ENCODE measurements at regions of chr10 and their contacts with region 1.

Region 1: DNA sequence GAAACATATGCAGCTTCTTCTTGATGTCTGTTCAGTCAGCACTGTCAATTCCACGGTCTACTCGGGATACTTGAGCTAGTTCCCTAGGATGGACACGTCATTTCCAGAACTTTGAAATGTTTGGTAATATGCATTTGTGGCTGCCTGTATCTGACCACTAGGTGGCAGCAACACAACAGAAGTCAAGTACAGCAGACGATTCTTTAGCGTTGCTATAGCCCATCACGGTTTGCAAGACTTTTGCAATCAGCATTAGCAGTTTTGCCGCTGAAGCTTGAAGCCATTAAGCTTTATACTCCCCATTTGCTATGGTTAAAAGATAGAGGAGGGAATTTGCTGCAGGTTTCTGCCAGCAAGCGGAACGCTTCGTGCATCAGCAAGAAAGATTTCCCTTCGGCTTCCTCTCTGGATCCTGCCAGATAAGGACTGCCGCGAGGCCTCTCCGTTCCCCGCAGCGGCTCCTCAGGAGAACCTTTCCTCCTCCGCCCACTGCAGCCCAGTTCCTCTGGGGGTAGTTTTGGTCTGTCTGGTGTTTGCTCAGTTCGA is 63.5 kb downstream of the ABCC2 start:
- DNase-seq: peak; percentile 41 to 88 (median 58)
- ATAC-seq: peak; percentile 81
- H3K4me3 ChIP-seq: peak overlapping the region; percentile 13
- H3K4me3 Mint-ChIP-seq: no peak overlapping the region
- H3K27ac ChIP-seq: no peak overlapping the region
- H3K27ac Mint-ChIP-seq: no peak overlapping the region
- H3K4me1 ChIP-seq: peaks cover 6% of the 10 kb centered on the region
- H3K4me1 Mint-ChIP-seq: peaks cover 5% of the 10 kb centered on the region
- H3K27me3 ChIP-seq: peaks cover 0 to 8% of the 10 kb centered on the region in 2 experiments
- H3K27me3 Mint-ChIP-seq: no peaks in the 10 kb centered on the region
- CTCF ChIP-seq: peak; percentile 92

Region 2: DNA sequence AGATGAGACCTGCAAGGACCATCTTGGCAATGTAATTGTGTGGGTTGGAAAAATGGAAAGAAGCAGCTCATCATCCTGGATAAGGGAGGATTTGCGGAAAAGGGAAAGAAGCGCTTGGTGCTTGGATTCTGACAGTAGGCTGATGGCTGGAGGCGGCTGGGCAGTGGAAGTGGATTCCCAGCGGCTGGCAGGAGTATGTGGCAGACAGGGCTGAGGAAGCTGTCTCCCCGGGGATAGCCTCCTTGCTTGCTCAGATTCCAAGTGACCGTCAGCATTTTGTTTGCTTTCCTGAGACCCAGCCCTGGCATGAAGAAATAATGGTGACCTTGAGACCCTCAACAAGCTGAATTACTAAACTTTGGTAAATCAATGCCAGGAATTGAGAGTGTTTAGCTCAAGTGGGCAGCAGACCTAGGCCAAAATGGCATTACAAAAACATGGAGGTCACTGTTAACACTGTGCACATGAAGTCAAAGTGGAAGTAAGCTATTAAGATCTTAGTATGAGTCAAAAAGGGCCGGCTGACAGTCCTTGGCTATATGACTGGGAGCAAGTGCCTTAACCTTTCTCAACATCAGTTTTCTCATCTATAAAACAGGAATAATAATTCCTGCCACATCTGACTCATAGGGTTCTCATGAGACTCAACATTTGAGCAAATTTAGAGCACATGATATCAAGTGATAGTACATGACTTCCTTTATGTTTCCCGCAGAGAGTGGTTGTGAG is 247.0 kb before region 1 on chr10:
- CTCF ChIA-PET with region 1: no interaction called
- POLR2A ChIA-PET with region 1: no interaction called
- intact Hi-C with region 1: no loop called
- DNase-seq: no peak
- ATAC-seq: no peak
- H3K4me3 ChIP-seq: no peak overlapping the region
- H3K4me3 Mint-ChIP-seq: no peak overlapping the region
- H3K27ac ChIP-seq: no peak overlapping the region
- H3K27ac Mint-ChIP-seq: no peak overlapping the region
- H3K4me1 ChIP-seq: no peaks in the 10 kb centered on the region
- H3K4me1 Mint-ChIP-seq: no peaks in the 10 kb centered on the region
- H3K27me3 ChIP-seq: no peaks in the 10 kb centered on the region
- H3K27me3 Mint-ChIP-seq: peaks cover 9% of the 10 kb centered on the region
- CTCF ChIP-seq: no peak

Region 3: GRCh38 chr10:100046021-100046486 is 200.1 kb after region 1 on chr10:
- CTCF ChIA-PET with region 1: interaction called, 41 read pairs
- POLR2A ChIA-PET with region 1: interaction called, 4 read pairs
- intact Hi-C with region 1: loop called in 1 of 2 experiments (anchors 1 kb)
- DNase-seq: peak; percentile 66 to 88 (median 78)
- ATAC-seq: peak; percentile 56
- H3K4me3 ChIP-seq: no peak overlapping the region
- H3K4me3 Mint-ChIP-seq: no peak overlapping the region
- H3K27ac ChIP-seq: no peak overlapping the region
- H3K27ac Mint-ChIP-seq: no peak overlapping the region
- H3K4me1 ChIP-seq: no peaks in the 10 kb centered on the region
- H3K4me1 Mint-ChIP-seq: no peaks in the 10 kb centered on the region
- H3K27me3 ChIP-seq: no peaks in the 10 kb centered on the region
- H3K27me3 Mint-ChIP-seq: peaks cover 10% of the 10 kb centered on the region
- CTCF ChIP-seq: peak; percentile 83

Region 4: GRCh38 chr10:100239851-100240250 is 393.9 kb after region 1 on chr10:
- CTCF ChIA-PET with region 1: no interaction called
- POLR2A ChIA-PET with region 1: no interaction called
- intact Hi-C with region 1: loop called (anchors 5 to 10 kb)
- DNase-seq: no peak
- ATAC-seq: no peak
- H3K4me3 ChIP-seq: no peak overlapping the region
- H3K4me3 Mint-ChIP-seq: no peak overlapping the region
- H3K27ac ChIP-seq: no peak overlapping the region
- H3K27ac Mint-ChIP-seq: no peak overlapping the region
- H3K4me1 ChIP-seq: no peaks in the 10 kb centered on the region
- H3K4me1 Mint-ChIP-seq: peaks cover 4% of the 10 kb centered on the region
- H3K27me3 ChIP-seq: no peaks in the 10 kb centered on the region
- H3K27me3 Mint-ChIP-seq: no peaks in the 10 kb centered on the region
- CTCF ChIP-seq: no peak